ENCODE measurements at regions of chr2 and their contacts with region 1.

Region 1: GRCh38 chr2:75608684-75609333 is 37.8 kb upstream of the MRPL19 start:
- DNase-seq: peak; percentile 53 to 78
- ATAC-seq: peak; percentile 79 to 92
- H3K4me3 ChIP-seq: peak overlapping the region; percentile 36
- H3K27ac ChIP-seq: peak overlapping the region; percentile 49 to 76; a peak in 4 of 6 replicates
- H3K4me1 ChIP-seq: peaks cover 37% of the 10 kb centered on the region
- CTCF ChIP-seq: peak; percentile 98
- EP300 ChIP-seq: no peak
- POLR2A ChIP-seq: no peak
- RAD21 ChIP-seq: peak; percentile 87 to 97

Region 2: DNA sequence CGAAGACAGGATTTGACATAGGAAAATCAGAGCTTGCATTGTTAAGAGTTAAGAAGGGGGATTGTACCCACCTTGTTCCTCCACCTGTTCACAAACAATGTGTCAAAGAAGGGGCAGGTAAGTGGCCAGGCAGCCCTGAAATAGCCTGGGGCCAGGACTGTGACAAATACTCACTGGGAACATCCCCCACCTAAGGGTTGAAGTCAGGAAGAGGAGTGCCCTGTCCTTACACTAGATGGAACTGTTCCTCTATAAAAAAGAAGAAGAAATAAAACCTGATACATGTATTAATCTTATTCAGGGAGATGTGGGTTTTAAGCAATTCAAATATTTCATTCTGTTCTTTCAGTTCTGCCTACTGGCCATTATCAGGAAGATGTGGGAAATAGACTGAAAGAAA is 451.4 kb before region 1 on chr2:
- CTCF ChIA-PET with region 1: interaction called, 11 read pairs
- POLR2A ChIA-PET with region 1: no interaction called
- DNase-seq: peak in 1 of 2 experiments; percentile 28
- ATAC-seq: peak; percentile 70 to 74; a peak in 5 of 6 replicates
- H3K4me3 ChIP-seq: no peak overlapping the region
- H3K27ac ChIP-seq: no peak overlapping the region
- H3K4me1 ChIP-seq: peaks cover 15% of the 10 kb centered on the region
- CTCF ChIP-seq: peak; percentile 37
- EP300 ChIP-seq: no peak
- POLR2A ChIP-seq: no peak
- RAD21 ChIP-seq: peak; percentile 57 to 60

Region 3: DNA sequence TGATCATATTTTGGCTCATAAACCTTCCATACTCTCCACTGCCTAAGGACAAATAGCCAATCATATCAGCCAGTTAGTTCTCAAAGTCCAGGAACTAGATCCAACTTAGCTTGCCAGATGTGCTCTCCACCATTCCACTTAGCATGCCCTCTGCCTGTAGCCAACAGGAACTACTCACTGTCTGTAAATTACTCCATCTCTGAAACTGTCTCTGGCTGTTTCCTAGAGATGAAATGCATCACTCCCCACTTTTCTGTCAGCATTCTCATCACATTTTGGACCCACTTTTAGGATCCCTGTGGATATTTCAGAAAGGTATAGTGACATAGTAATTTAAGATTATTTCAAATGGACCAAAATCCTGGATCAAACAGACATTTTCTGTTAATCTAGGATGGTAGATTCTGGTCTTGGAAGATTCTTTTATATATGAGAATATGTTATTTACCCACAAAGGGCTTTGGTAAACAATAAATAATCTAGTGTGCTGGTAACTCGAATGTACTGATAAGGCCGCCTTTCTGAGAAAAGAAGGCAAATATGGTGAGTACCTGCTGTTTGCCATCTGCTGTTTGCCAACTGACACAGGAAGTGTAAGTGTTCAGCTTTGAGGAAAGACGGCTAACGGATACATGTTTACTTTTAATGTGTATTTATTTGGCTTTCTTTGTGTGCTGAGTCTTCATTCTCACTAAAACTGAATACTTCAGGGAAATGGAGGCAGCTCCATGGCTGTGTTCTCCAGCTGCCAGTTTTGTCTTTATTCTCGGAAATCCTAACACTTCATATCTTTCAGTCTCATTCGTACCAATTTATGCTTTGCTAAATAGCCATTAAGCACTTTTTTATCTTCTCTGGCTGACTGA is 127.6 kb before region 1 on chr2:
- CTCF ChIA-PET with region 1: interaction called, 14 read pairs
- POLR2A ChIA-PET with region 1: no interaction called
- DNase-seq: peak in 1 of 2 experiments; percentile 52
- ATAC-seq: peak; percentile 76 to 90; a peak in 5 of 6 replicates
- H3K4me3 ChIP-seq: no peak overlapping the region
- H3K27ac ChIP-seq: no peak overlapping the region
- H3K4me1 ChIP-seq: no peaks in the 10 kb centered on the region
- CTCF ChIP-seq: peak; percentile 32
- EP300 ChIP-seq: no peak
- POLR2A ChIP-seq: no peak
- RAD21 ChIP-seq: peak; percentile 10 to 26; a peak in 1 of 5 replicates

Region 4: GRCh38 chr2:75523313-75524275 is 85.2 kb before region 1 on chr2:
- CTCF ChIA-PET with region 1: interaction called, 12 read pairs
- POLR2A ChIA-PET with region 1: no interaction called
- DNase-seq: peak; percentile 54 to 66
- ATAC-seq: peak; percentile 84 to 87
- H3K4me3 ChIP-seq: no peak overlapping the region
- H3K27ac ChIP-seq: peak overlapping the region; percentile 37 to 76; a peak in 5 of 6 replicates
- H3K4me1 ChIP-seq: peaks cover 58% of the 10 kb centered on the region
- CTCF ChIP-seq: no peak
- EP300 ChIP-seq: peak in 1 of 2 experiments; percentile 74; a peak in 1 of 5 replicates
- POLR2A ChIP-seq: no peak
- RAD21 ChIP-seq: no peak

Region 5: DNA sequence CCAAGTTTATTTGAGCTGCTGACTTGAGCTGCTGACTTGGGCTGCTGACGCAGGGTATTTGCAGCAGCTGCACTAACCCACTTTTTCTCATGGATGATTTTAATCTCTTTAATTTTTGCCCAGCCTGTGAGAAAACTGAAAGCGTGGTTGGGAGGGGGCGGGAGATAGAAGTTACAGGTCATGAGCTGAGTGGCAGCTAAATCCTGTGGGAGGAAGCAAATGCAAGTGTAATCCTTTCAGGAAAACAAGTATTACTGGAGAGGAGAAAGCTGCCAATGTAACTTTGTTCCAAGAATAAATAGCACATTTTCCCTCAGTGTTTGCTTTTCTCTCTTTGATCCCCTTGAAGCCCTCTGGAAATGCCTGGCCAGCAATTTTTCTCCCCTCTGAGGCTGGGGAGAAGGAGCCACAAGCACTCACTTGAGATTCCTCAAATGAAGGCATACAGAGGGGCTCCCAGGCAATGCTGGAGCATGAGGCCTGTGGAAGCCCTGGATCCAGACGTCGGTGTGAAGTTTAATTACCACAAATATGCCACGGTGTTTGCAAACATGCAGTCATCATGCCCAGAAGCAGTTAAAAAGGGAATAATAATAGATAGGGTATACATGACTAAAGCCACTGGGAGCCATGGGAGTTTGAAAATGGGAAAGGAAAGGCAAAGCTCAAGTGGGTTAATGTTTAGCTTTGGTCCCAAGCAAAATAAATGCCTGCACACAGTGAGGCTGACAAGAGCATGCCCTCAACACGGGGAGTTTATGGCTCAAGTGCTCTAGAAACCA is 37.7 kb before region 1 on chr2:
- CTCF ChIA-PET with region 1: interaction called, 51 read pairs
- POLR2A ChIA-PET with region 1: interaction called, 4 read pairs
- DNase-seq: no peak
- ATAC-seq: no peak
- H3K4me3 ChIP-seq: no peak overlapping the region
- H3K27ac ChIP-seq: peak overlapping the region in 1 of 2 experiments; percentile 30; a peak in 1 of 6 replicates
- H3K4me1 ChIP-seq: peaks cover 12% of the 10 kb centered on the region; the same call in 2 of the 3 replicates
- CTCF ChIP-seq: no peak
- EP300 ChIP-seq: no peak
- POLR2A ChIP-seq: no peak
- RAD21 ChIP-seq: no peak

Region 6: GRCh38 chr2:75619956-75620740 is 11.3 kb after region 1 on chr2:
- CTCF ChIA-PET with region 1: interaction called, 36 read pairs
- POLR2A ChIA-PET with region 1: no interaction called
- DNase-seq: no peak
- ATAC-seq: no peak
- H3K4me3 ChIP-seq: no peak overlapping the region
- H3K27ac ChIP-seq: no peak overlapping the region
- H3K4me1 ChIP-seq: no peaks in the 10 kb centered on the region
- CTCF ChIP-seq: no peak
- EP300 ChIP-seq: no peak
- POLR2A ChIP-seq: no peak
- RAD21 ChIP-seq: no peak

Region 7: DNA sequence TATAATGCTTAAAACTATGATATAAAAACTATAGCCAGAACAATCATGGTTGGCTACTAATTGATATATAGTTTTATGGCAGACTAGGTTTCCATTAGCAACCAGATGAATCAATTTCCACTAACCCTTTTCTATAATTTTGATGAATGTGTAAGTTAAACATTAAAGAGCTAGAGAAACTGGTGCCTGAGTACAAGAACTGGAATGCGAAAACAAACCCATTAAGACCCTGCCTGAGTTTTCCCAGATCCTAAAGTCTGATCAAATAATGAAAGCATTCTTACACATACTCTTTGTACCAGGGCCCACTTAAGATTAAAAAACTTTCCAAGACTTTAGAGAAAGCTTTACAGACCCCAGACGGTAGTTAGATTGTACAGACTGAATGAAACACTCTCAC is 59.1 kb after region 1 on chr2:
- CTCF ChIA-PET with region 1: no interaction called
- POLR2A ChIA-PET with region 1: no interaction called
- DNase-seq: no peak
- ATAC-seq: no peak; a peak in 1 of 6 replicates
- H3K4me3 ChIP-seq: no peak overlapping the region
- H3K27ac ChIP-seq: no peak overlapping the region
- H3K4me1 ChIP-seq: 0 out of 3 replicates have a peak, but pooled peaks cover 4% of the 10 kb centered on the region
- CTCF ChIP-seq: no peak
- EP300 ChIP-seq: no peak
- POLR2A ChIP-seq: no peak
- RAD21 ChIP-seq: no peak

Measured in A549 (cell line).